ENCODE measurements at regions of chr14 and their contacts with region 1.

Region 1: GRCh38 chr14:21455911-21456667 is at the start of gene CHD8:
- DNase-seq: peak; percentile 93 to 98 (median 95)
- ATAC-seq: peak; percentile 98
- H3K4me3 ChIP-seq: peak within 1 kb of the TSS; percentile 99
- H3K27ac ChIP-seq: peak within 1 kb of the TSS; percentile 99
- H3K4me1 ChIP-seq: peaks cover 3 to 4% of the 10 kb centered on the region in 2 experiments; a peak in 3 of 5 replicates
- H3K27me3 ChIP-seq: no peaks in the 10 kb centered on the region
- CTCF ChIP-seq: peak; percentile 61 to 80 (median 77)
- EP300 ChIP-seq: no peak
- POLR2A ChIP-seq: peak; percentile 85
- RAD21 ChIP-seq: peak in 1 of 2 experiments; percentile 37; a peak in 3 of 4 replicates
- polyA plus RNA-seq, gene CHD8: 11.8 to 16.8 TPM

Region 2: DNA sequence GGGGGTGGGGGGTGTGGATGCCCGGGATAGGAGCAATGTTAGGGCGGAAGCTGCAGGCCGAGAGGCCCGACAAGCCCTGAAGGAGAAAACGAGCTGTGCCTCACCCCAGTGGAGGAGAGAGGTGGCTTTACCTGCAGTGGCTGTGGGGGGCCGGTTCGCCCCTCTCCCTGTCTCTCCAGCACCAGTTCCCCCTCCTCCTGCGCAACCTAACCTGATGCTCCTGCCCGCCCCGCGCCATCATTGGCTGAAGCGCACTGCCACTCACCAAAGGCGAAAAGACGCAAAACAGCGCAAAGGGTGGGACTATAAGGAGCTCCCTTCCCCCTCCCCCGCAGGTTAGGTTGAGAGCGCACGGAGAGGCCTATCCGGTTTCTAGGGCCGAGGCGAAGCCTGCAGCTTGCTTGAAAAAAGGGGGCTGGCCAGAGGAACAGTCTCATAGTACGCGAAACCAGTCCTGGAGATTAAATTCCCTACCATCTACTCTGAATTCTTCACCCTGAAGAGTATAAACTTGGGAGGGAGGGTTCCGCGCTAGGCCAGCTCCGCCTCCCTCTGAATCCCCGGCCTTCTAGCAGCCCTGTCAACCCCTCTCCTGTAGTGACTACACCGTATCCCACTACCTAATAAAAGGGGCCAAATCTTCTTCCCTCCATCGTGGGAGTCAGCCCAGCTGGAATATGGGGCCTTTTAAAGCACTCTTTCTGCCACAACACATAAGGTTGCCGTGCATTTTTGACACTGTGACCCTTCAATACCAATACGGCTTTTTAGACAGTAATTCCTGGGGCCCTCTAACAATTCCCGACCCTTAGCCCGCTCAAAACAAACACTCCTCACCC is 18.8 kb before region 1 on chr14:
- CTCF ChIA-PET with region 1: no interaction called
- POLR2A ChIA-PET with region 1: interaction called, 8 read pairs
- in situ Hi-C with region 1: no loop called
- intact Hi-C with region 1: loop called (anchors 1 kb)
- DNase-seq: peak; percentile 90 to 97 (median 92)
- ATAC-seq: peak; percentile 98
- H3K4me3 ChIP-seq: peak overlapping the region; percentile 75
- H3K27ac ChIP-seq: peak overlapping the region; percentile 91
- H3K4me1 ChIP-seq: peaks cover 10 to 15% of the 10 kb centered on the region in 2 experiments; a peak in 3 of 5 replicates
- H3K27me3 ChIP-seq: no peaks in the 10 kb centered on the region
- CTCF ChIP-seq: no peak
- EP300 ChIP-seq: no peak
- POLR2A ChIP-seq: peak; percentile 72
- RAD21 ChIP-seq: no peak

Region 3: GRCh38 chr14:21467616-21468015 is 11.5 kb after region 1 on chr14:
- CTCF ChIA-PET with region 1: no interaction called
- POLR2A ChIA-PET with region 1: interaction called, 13 read pairs
- in situ Hi-C with region 1: no loop called
- intact Hi-C with region 1: no loop called
- DNase-seq: no peak
- ATAC-seq: no peak
- H3K4me3 ChIP-seq: no peak overlapping the region
- H3K27ac ChIP-seq: no peak overlapping the region
- H3K4me1 ChIP-seq: no peaks in the 10 kb centered on the region
- H3K27me3 ChIP-seq: no peaks in the 10 kb centered on the region
- CTCF ChIP-seq: no peak
- EP300 ChIP-seq: no peak
- POLR2A ChIP-seq: no peak
- RAD21 ChIP-seq: no peak

Region 4: DNA sequence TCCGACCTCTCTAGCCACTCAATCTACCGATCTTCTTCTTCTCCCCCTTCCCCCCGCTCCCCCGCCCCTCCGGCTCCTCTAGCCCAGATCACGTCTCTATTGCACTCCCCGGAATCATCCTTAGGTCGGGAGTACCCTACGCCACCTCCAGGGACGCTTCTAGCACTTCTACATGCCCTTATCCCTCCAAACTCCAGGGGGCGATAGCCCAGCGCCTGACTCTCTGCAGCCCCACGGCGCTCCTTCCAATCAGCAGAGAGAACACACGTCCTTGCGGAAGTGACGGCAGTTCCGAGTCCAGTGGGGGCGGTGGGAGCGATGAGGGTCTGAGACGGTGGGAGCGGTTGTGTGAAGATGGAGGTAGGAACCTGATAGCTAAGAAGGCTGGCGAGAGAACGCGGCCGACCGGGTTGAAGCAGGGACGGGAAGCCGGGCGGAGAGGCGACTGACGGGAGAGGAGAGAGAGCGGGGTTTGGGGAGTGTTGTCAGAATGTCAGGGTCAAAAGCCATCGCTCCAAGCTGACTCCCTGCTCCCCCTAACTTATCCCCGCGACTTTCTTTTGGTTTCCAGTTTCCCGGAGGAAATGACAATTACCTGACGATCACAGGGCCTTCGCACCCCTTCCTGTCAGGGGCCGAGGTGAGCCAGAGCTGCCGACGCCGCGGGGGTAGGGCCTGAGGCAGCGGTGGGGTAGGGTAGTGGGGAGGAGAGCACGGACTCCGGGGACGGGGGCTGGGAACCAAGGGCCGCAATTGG is 21.0 kb after region 1 on chr14 and contains the starts of genes RAB2B and TOX4:
- CTCF ChIA-PET with region 1: no interaction called
- POLR2A ChIA-PET with region 1: interaction called, 7 read pairs
- in situ Hi-C with region 1: no loop called
- intact Hi-C with region 1: loop called (anchors 1 kb)
- DNase-seq: peak; percentile 79 to 96 (median 84)
- ATAC-seq: peak; percentile 98
- H3K4me3 ChIP-seq: peak within 1 kb of the TSS; percentile 74
- H3K27ac ChIP-seq: peak within 1 kb of the TSS; percentile 83
- H3K4me1 ChIP-seq: peaks cover 0 to 4% of the 10 kb centered on the region in 2 experiments; a peak in 1 of 5 replicates
- H3K27me3 ChIP-seq: no peaks in the 10 kb centered on the region
- CTCF ChIP-seq: peak; percentile 92 to 99 (median 98)
- EP300 ChIP-seq: peak; percentile 24; the same call in 1 of the 2 replicates
- POLR2A ChIP-seq: peak; percentile 85
- RAD21 ChIP-seq: 0 out of 4 replicates have a peak, but pooled peaks have one; percentile 13 to 16
- polyA plus RNA-seq, gene RAB2B: 4.6 to 10.2 TPM
- polyA plus RNA-seq, gene TOX4: 41.0 to 76.5 TPM

Region 5: GRCh38 chr14:21557084-21557901 is 101.2 kb after region 1 on chr14:
- CTCF ChIA-PET with region 1: no interaction called
- POLR2A ChIA-PET with region 1: no interaction called
- in situ Hi-C with region 1: no loop called
- intact Hi-C with region 1: loop called (anchors 1 kb)
- DNase-seq: peak; percentile 49 to 88 (median 51)
- ATAC-seq: peak; percentile 84
- H3K4me3 ChIP-seq: peak overlapping the region; percentile 34
- H3K27ac ChIP-seq: peak overlapping the region; percentile 48; the same call in 1 of the 3 replicates
- H3K4me1 ChIP-seq: no peaks in the 10 kb centered on the region; a peak in 1 of 5 replicates
- H3K27me3 ChIP-seq: no peaks in the 10 kb centered on the region
- CTCF ChIP-seq: peak; percentile 49 to 81 (median 60); a peak in 5 of 6 replicates
- EP300 ChIP-seq: no peak; the same call in 1 of the 2 replicates
- POLR2A ChIP-seq: no peak
- RAD21 ChIP-seq: peak; percentile 72 to 77